Dorsolateral prefrontal cortex (tissue), 120 donors: ENCODE measurements at regions of chr9 and their contacts with region 1.

Region 1: DNA sequence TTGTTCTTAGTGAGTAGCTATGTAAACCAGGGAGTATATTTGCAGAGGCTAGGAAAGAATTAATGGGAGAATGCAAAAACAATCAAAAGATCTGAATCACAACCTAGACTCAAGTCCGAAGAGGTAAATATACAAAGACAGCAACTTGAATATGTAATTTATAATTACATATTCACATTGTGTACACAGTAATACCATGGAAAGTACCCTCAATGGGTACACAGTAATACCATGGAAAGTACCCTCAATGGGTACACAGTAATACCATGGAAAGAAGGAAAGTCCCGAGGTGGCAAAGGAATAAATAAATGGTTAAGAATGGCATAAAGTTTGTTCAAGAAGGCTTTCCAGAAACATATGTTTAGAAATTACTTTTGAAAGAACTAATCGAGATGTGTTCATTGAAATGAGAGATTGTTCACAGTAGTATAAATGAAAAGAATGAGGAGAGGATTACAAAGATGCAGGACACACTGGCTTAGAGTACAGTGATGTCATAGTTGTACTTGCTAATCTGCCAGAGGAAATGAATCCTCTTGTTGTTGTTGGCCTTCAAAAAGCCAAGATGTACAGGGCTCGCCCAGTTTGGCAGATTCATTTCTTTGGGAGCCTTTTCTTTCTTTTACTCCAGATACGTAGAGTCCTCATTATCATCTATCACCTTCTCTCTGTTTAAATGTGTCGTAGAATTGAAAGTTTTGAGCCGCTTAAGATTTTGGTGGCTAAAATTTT is 116.0 kb downstream of the UNC13B start:
- DNase-seq: no peak
- H3K4me3 ChIP-seq: peak overlapping the region in 32 of 59 donors; percentile 1 to 58 (median 27)
- H3K27ac ChIP-seq: peak overlapping the region in 50 of 59 donors; percentile 1 to 79 (median 47)
- H3K27me3 ChIP-seq: no peaks in the 10 kb centered on the region
- CTCF ChIP-seq: peak in 2 of 56 donors; percentile 10 to 11

Region 2: GRCh38 chr9:35350827-35351549 is 73.2 kb after region 1 on chr9:
- intact Hi-C with region 1: loop called in 1 of 2 experiments (anchors 5 kb)
- DNase-seq: no peak
- H3K4me3 ChIP-seq: peak overlapping the region in 4 of 59 donors; percentile 13 to 31 (median 22)
- H3K27ac ChIP-seq: peak overlapping the region in 16 of 59 donors; percentile 6 to 78 (median 38)
- H3K27me3 ChIP-seq: no peaks in the 10 kb centered on the region
- CTCF ChIP-seq: no peak

Region 3: DNA sequence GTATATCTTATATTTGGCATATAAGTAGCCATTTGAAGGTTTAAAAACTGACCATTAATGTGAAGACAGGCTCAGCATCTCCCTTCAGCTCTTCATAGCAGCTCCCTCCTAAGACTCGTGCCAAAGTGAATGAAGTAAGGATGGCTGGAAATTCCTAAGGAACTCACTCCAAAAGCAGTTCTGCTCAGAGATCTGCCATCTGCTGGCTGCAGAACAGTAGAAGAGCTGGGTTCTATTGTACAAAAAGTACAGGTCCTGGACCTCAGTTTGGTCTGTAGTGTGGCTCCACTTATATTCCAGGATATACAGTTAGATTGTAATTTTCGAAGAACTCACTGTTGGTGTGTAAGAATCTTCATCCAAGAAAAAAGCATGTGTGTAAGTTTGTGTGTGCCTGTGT is 107.2 kb after region 1 on chr9:
- intact Hi-C with region 1: loop called in 1 of 2 experiments (anchors 5 kb)
- DNase-seq: peak in 1 of 10 donors; percentile 55
- H3K4me3 ChIP-seq: no peak overlapping the region
- H3K27ac ChIP-seq: no peak overlapping the region
- H3K27me3 ChIP-seq: no peaks in the 10 kb centered on the region
- CTCF ChIP-seq: peak in 51 of 56 donors; percentile 12 to 66 (median 47)

Region 4: GRCh38 chr9:35476596-35476995 is 198.8 kb after region 1 on chr9:
- intact Hi-C with region 1: loop called (anchors 5 to 10 kb)
- DNase-seq: no peak
- H3K4me3 ChIP-seq: no peak overlapping the region
- H3K27ac ChIP-seq: no peak overlapping the region
- H3K27me3 ChIP-seq: no peaks in the 10 kb centered on the region
- CTCF ChIP-seq: no peak

Region 5: GRCh38 chr9:35553670-35554543 is 276.1 kb after region 1 on chr9:
- intact Hi-C with region 1: loop called in 1 of 2 experiments (anchors 5 kb)
- DNase-seq: peak in 8 of 10 donors; percentile 54 to 78 (median 67)
- H3K4me3 ChIP-seq: peak overlapping the region in 13 of 59 donors; percentile 1 to 38 (median 19)
- H3K27ac ChIP-seq: peak overlapping the region in 53 of 59 donors; percentile 7 to 86 (median 68)
- H3K27me3 ChIP-seq: no peaks in the 10 kb centered on the region
- CTCF ChIP-seq: peak; percentile 75 to 97 (median 92)

Region 6: GRCh38 chr9:36092509-36093215 is 814.9 kb after region 1 on chr9:
- intact Hi-C with region 1: no loop called
- DNase-seq: no peak
- H3K4me3 ChIP-seq: no peak overlapping the region
- H3K27ac ChIP-seq: peak overlapping the region in 2 of 59 donors; percentile 13 to 14
- H3K27me3 ChIP-seq: no peaks in the 10 kb centered on the region
- CTCF ChIP-seq: no peak